Naive thymus-derived CD4-positive, alpha-beta T cell (primary cell): ENCODE measurements at regions of chr9 and their contacts with region 1.

Region 1: GRCh38 chr9:133677126-133678010 is 41.2 kb downstream of the DBH start:
- DNase-seq: peak; percentile 34 to 93 (median 90)
- ATAC-seq: peak; percentile 97
- H3K4me3 ChIP-seq: peak overlapping the region; percentile 6
- H3K4me3 Mint-ChIP-seq: peak overlapping the region; percentile 27 to 84 (median 74)
- H3K27ac ChIP-seq: peak overlapping the region; percentile 84
- H3K27ac Mint-ChIP-seq: peak overlapping the region; percentile 88 to 100 (median 99)
- H3K4me1 ChIP-seq: peaks cover 29 to 45% of the 10 kb centered on the region in 2 donors
- H3K4me1 Mint-ChIP-seq: peaks cover 32 to 65% (median 51%) of the 10 kb centered on the region in 7 donors
- H3K27me3 ChIP-seq: no peaks in the 10 kb centered on the region
- H3K27me3 Mint-ChIP-seq: no peaks in the 10 kb centered on the region

Region 2: GRCh38 chr9:133619791-133620190 is 57.6 kb before region 1 on chr9:
- CTCF ChIA-PET with region 1: no interaction called
- POLR2A ChIA-PET with region 1: no interaction called
- intact Hi-C with region 1: loop called in 1 of 2 experiments (anchors 2 kb)
- DNase-seq: peak in 8 of 9 donors; percentile 46 to 73 (median 64)
- ATAC-seq: peak; percentile 86
- H3K4me3 ChIP-seq: peak overlapping the region; percentile 9
- H3K4me3 Mint-ChIP-seq: peak overlapping the region; percentile 31 to 82 (median 68)
- H3K27ac ChIP-seq: no peak overlapping the region
- H3K27ac Mint-ChIP-seq: peak overlapping the region in 7 of 9 donors; percentile 10 to 73 (median 24)
- H3K4me1 ChIP-seq: peaks cover 23 to 36% of the 10 kb centered on the region in 2 donors
- H3K4me1 Mint-ChIP-seq: peaks cover 28 to 52% (median 50%) of the 10 kb centered on the region in 7 donors
- H3K27me3 ChIP-seq: no peaks in the 10 kb centered on the region
- H3K27me3 Mint-ChIP-seq: peaks cover 0 to 17% (median 0%) of the 10 kb centered on the region in 5 donors